A673 (cell line): ENCODE measurements at regions of chr10 and their contacts with region 1.

Region 1: DNA sequence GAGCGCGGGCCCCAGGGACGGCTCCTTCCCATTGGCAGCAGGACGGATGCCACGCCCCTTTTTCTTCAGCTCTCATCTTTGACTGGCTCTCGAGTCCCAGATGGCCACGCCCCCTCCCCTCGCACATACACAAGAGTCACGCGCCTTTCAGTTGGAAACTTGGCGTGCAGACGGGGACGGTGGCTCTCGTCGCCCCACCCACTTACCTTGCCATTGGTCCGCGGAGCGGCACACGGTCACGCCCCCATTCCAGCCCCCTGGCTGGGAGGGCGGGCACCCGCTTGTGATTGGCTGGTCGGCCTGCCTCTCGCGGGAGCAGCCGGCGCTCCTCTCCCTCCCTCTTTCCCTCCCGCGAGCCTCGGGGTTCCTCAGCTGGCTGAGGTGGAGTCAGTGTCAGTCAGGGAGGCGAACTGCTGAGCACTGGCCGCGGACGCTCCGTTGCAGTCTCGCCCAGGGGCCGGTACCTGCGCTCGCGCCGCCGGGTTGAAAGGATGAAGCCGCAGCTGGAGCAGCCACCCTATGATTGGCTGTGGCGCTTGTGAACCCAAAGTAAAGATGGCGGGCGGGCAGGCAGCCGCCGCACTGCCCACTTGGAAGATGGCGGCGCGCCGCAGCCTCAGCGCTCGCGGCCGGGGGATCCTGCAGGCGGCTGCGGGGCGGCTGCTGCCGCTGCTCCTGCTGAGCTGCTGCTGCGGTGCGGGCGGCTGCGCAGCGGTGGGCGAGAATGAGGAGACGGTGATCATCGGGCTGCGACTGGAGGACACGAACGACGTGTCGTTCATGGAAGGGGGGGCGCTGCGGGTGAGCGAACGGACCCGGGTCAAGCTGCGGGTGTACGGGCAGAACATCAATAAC is at the start of gene CNNM2:
- DNase-seq: peak; percentile 100
- H3K4me3 ChIP-seq: peak within 1 kb of the TSS; percentile 98
- H3K27ac ChIP-seq: peak within 1 kb of the TSS; percentile 70
- H3K4me1 ChIP-seq: peaks cover 19% of the 10 kb centered on the region
- H3K27me3 ChIP-seq: no peaks in the 10 kb centered on the region
- CTCF ChIP-seq: no peak
- total RNA-seq, gene CNNM2: 4.8 and 5.6 TPM in 2 replicates

Region 2: DNA sequence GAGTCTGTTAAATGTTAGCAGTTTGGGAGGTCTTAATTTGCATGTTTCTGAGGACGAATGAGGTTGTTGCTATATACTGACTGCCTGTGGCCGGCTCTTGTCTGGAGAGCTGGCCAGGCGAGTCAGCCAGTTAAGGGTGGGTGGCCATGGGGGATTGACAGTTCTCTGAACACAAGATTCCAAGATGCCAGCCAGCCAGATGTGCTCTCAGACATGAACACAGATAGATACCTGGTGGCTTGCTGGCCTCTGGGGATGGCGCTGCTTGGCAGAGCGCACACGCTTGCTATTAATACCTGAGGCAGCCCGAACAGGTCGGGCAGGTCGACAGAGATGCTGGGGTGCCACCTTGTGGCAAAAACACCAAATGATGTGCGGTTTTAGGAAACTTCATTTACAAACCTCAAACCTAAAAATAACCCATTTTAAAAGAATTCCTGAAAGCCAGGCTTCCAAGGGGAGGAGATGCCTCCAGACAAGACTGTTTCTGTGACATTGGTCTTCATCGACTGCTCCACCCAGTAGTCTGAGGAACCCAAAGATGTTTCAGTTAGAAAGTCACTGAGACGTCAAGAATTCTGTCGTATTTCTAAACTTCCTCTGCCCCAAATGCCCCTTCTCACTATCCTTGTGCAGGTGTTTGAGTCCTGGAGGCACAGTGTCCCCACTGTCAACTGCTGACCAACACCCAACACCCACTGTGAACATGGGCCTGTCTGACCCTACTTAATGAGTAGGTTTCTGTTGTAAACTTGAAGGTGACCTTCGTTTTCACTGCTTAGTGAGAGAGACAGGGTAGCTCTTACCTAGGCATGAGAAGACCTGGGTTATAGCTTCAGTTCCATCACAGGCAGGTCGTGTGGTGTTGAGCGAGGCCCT is 151.5 kb after region 1 on chr10:
- CTCF ChIA-PET with region 1: interaction called, 5 read pairs
- POLR2A ChIA-PET with region 1: interaction called, 3 read pairs
- intact Hi-C with region 1: loop called (anchors 1 kb)
- DNase-seq: peak; percentile 56
- H3K4me3 ChIP-seq: no peak overlapping the region
- H3K27ac ChIP-seq: no peak overlapping the region
- H3K4me1 ChIP-seq: no peaks in the 10 kb centered on the region
- H3K27me3 ChIP-seq: no peaks in the 10 kb centered on the region
- CTCF ChIP-seq: peak; percentile 73

Region 3: DNA sequence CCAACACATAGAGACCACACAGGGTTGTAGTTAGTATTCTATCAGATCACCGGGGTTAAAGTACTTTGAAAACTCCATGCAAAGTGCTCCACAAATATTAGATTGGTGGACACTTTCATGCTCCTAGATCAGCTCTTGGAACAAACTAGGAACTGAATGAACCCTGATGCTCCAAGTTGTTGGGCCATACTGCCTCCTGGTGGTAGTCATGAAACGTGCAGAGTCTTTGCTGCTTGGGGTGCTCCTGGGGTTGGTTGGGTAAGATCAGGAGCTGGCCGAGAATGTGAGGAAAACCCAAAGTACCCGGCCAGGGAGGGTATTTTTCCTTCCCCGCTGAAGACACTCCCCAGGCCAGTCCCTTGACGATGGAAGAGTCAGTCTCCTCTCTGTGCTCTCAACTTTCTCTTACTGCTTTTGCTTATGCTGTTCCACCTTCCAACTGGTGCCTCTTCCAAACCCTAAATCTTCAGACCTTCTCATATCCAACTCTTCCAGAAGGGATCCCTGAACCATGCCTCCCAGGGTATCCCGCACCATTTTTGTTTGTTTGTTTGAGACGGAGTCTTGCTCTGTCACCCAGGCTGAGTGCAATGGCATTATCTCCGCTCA is 326.6 kb after region 1 on chr10:
- CTCF ChIA-PET with region 1: interaction called, 22 read pairs
- POLR2A ChIA-PET with region 1: no interaction called
- intact Hi-C with region 1: loop called (anchors 1 kb)
- DNase-seq: peak; percentile 82
- H3K4me3 ChIP-seq: no peak overlapping the region
- H3K27ac ChIP-seq: no peak overlapping the region
- H3K4me1 ChIP-seq: no peaks in the 10 kb centered on the region
- H3K27me3 ChIP-seq: no peaks in the 10 kb centered on the region
- CTCF ChIP-seq: peak; percentile 86

Region 4: DNA sequence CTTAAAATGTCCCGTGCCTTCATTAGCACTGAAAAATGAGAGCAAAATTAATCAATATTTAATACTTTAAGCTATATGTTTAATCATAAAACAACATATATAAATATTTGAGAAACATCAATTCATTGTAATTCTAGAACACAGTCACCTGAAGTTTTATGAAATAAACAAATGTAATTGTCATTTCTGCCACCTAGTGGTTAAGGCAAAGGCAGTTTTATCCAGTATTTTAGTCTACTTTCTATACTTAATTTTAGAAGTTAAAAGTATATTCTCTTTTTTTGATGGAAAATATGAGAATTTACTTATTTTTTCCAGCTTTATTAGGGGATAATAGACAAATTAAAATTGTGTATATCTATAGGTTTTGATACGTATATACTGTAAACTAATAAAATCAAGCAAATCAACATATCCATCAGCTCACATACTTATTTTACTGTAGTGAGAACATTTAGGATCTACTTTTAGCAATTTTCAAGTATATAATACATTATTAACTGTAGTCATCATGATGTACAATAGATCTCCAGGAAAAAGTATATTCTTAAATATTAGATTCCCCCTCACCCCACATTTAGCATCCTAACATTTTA is 415.8 kb after region 1 on chr10:
- CTCF ChIA-PET with region 1: interaction called, 4 read pairs
- POLR2A ChIA-PET with region 1: no interaction called
- intact Hi-C with region 1: loop called (anchors 1 kb)
- DNase-seq: peak; percentile 39
- H3K4me3 ChIP-seq: no peak overlapping the region
- H3K27ac ChIP-seq: no peak overlapping the region
- H3K4me1 ChIP-seq: no peaks in the 10 kb centered on the region
- H3K27me3 ChIP-seq: no peaks in the 10 kb centered on the region
- CTCF ChIP-seq: peak; percentile 76

Region 5: GRCh38 chr10:103481974-103482531 is 563.9 kb after region 1 on chr10:
- CTCF ChIA-PET with region 1: no interaction called
- POLR2A ChIA-PET with region 1: no interaction called
- intact Hi-C with region 1: loop called (anchors 5 kb)
- DNase-seq: peak; percentile 70
- H3K4me3 ChIP-seq: no peak overlapping the region
- H3K27ac ChIP-seq: no peak overlapping the region
- H3K4me1 ChIP-seq: no peaks in the 10 kb centered on the region
- H3K27me3 ChIP-seq: no peaks in the 10 kb centered on the region
- CTCF ChIP-seq: peak; percentile 79